ENCODE measurements at regions of chr13 and their contacts with region 1.

Region 1: GRCh38 chr13:20080377-20081164 is 80.3 kb downstream of the GJA3 start:
- DNase-seq: no peak
- ATAC-seq: peak; percentile 98

Region 2: DNA sequence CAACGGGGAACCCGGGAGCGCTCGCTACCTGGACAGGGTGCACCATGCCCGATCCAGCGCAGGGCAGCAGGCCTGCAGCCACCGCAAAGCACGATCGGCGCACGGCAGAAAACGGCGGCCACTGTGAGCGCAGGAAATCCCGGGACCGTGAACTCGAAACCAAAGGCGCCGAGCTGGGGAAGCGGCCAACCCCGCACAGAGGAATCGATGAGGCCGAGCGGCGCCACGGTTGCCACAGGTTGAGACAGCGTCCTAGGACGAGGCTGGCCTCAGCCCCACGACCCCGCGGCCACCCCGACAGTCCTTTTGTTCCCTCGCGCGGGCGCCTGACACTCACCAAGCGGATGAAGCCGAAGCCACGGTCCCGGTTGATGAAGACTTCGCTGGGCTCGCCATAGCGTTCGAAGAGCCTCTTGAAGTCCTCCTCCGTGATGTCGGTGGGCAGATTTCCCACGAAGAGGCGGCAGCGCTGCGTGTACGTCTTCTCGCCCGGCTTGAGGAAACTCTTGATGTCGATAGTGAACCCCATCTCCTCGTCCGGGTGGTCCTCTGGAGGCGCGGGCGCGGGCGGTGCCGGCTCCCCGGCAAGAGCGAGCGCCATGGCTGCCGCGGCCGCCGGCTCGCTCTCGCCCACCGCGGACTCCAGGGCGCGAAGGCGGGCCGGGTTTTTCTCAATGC is 298.4 kb before region 1 on chr13:
- intact Hi-C with region 1: no loop called
- DNase-seq: peak; percentile 76
- ATAC-seq: peak; percentile 76

Region 3: DNA sequence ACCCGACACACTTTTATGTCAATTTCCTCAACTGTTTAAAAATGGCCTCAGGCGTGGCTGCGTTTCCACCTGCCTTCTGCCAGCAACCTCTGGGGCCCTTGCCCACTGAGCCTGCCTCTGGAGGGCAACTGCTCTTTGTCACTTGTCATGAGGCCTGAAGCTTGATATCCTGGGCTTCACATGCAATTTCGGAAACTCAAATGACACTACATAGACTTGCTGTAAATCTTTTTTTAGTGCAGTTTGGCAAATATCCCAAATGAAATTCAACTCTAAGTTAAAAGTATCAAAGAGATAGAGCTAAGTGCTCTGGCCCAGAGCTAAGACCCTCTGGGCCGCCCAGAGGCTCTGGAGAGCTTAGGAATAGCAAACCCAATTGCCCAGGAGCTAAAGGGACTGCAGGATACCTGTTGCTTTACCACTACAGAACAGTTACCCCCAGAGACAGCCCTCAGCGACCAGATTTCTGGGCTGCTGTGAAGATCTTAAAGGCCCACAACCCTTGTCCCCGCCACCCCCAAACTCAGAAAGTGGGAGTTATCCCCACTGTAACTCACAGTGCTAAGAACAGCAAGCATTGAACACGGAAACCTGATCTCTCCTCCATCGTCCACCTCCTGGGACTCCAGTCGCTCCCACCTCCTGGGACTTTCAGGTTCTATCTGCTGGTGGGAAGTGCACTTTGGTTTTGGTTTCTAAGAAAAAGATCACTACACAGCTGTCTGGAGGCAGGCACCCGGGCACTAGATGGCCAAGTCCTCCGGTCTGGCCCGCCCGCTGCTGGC is 60.9 kb after region 1 on chr13:
- intact Hi-C with region 1: loop called (anchors 10 kb)
- DNase-seq: peak; percentile 78
- ATAC-seq: peak; percentile 93

Region 4: GRCh38 chr13:20219577-20219976 is 139.0 kb after region 1 on chr13:
- intact Hi-C with region 1: no loop called
- DNase-seq: no peak
- ATAC-seq: no peak

Measured in left ventricle myocardium superior (tissue), 1 donor.